H1 (cell line): ENCODE measurements at regions of chr1 and their contacts with region 1.

Region 1: DNA sequence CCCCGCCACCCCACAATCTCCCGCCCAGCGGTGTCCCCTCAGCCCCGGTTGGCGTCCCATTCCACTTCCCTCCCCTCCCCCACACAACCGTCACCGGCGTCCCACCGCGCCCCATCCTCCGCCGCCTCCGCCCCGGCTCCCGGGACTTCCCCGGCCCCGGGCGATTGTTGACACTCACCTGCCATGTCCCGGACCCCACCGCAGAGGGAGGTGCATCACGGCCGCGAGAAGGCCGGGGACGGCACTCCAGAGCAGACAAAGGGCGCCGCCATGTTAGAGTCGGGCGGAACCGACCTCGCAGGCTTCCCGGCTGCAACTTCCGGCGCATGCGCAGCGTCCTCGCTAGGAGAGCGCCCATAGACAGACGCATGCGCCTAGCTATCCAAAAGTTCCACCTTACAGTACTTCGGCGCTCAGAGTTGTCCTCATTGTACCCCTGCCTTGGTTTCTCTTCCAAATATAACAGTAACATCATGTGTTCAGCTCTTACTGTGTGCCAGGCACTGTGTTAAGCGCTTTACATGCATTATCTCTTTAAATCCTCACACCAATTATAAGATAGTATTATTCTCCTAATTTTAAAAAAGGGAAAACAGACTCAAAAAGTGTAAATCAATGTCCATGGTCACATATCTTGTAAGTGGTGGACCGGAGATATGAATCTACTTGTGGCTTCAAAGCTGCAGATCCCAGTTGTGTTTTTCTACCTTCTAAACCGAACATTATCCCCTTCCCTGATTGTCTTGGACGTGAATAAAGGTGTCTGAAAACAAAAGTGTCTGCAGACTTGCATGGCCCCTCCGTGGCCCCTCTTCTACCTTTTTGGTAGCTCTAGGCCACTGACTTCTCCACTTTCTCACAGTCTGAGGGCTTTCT is at the start of gene ZBTB17:
- DNase-seq: peak; percentile 83 to 95
- H3K4me3 ChIP-seq: peak within 1 kb of the TSS; percentile 70 to 87 (median 80)
- H3K27ac ChIP-seq: no peak within 1 kb of the TSS
- H3K4me1 ChIP-seq: peaks cover 0 to 4% (median 0%) of the 10 kb centered on the region in 4 experiments; a peak in 1 of 7 replicates
- H3K27me3 ChIP-seq: no peaks in the 10 kb centered on the region
- CTCF ChIP-seq: no peak
- EP300 ChIP-seq: peak in 1 of 2 experiments; percentile 30; a peak in 1 of 3 replicates
- POLR2A ChIP-seq: peak in 1 of 2 experiments; percentile 70; a peak in 2 of 3 replicates
- RAD21 ChIP-seq: no peak
- total RNA-seq, gene ZBTB17: 24.3 and 24.7 TPM in 2 replicates

Region 2: GRCh38 chr1:15949453-15950245 is 26.4 kb before region 1 on chr1:
- CTCF ChIA-PET with region 1: interaction called, 11 read pairs
- POLR2A ChIA-PET with region 1: interaction called, 4 read pairs
- DNase-seq: peak in 1 of 2 experiments; percentile 56
- H3K4me3 ChIP-seq: no peak overlapping the region
- H3K27ac ChIP-seq: no peak overlapping the region
- H3K4me1 ChIP-seq: peaks cover 10 to 29% (median 21%) of the 10 kb centered on the region in 4 experiments
- H3K27me3 ChIP-seq: no peaks in the 10 kb centered on the region
- CTCF ChIP-seq: no peak
- EP300 ChIP-seq: no peak
- POLR2A ChIP-seq: no peak
- RAD21 ChIP-seq: no peak

Region 3: GRCh38 chr1:15957228-15958095 is 18.6 kb before region 1 on chr1:
- CTCF ChIA-PET with region 1: interaction called, 53 read pairs
- POLR2A ChIA-PET with region 1: interaction called, 10 read pairs
- DNase-seq: peak in 1 of 2 experiments; percentile 76
- H3K4me3 ChIP-seq: no peak overlapping the region
- H3K27ac ChIP-seq: no peak overlapping the region
- H3K4me1 ChIP-seq: peaks cover 6 to 18% (median 11%) of the 10 kb centered on the region in 4 experiments
- H3K27me3 ChIP-seq: peaks cover 0 to 3% (median under 1%) of the 10 kb centered on the region in 4 experiments; a peak in 2 of 7 replicates
- CTCF ChIP-seq: peak; percentile 52 to 75 (median 72)
- EP300 ChIP-seq: no peak
- POLR2A ChIP-seq: no peak
- RAD21 ChIP-seq: peak; percentile 34 to 60; a peak in 3 of 4 replicates